ENCODE measurements at regions of chr5 and their contacts with region 1.

Region 1: DNA sequence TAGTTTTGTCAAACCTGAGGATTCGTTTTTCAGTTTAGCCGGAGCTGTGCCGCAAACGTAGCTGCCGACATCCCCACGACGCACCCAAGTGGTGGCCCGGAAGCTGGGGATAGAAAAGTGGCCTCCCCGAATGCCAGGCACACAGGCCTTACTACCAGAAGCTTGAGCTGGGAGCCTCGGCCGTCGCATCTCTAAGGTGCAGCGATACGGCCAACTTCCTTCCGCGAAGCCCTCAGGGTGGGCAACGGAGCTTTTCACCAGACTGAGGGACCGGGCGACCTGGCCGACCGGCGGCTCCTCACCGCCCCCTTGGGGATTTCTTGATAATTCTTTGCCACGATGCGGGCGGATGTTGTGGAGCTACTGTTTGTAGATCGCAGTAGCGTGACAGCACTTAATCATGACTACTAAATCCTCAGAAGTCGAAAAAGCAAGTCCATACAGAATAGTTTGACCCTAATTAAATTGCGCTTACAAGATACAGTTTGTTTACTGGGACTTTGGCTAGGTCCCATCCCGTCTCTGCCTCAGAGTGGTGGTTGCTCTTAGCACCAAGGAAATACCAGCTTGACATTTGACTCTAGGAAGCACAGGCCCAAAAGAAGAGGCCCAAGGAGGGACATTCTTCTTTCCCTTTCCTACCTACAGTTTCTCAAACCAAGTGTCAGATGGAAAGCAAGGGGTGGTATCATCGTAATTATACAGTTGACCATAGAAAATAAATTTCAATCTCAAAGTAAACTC is 613 bp upstream of the TMEM267 start:
- DNase-seq: peak; percentile 82
- H3K4me3 Mint-ChIP-seq: peak overlapping the region; percentile 97
- H3K27ac Mint-ChIP-seq: peak overlapping the region; percentile 100
- H3K4me1 Mint-ChIP-seq: peaks cover 34% of the 10 kb centered on the region
- H3K27me3 Mint-ChIP-seq: no peaks in the 10 kb centered on the region

Region 2: DNA sequence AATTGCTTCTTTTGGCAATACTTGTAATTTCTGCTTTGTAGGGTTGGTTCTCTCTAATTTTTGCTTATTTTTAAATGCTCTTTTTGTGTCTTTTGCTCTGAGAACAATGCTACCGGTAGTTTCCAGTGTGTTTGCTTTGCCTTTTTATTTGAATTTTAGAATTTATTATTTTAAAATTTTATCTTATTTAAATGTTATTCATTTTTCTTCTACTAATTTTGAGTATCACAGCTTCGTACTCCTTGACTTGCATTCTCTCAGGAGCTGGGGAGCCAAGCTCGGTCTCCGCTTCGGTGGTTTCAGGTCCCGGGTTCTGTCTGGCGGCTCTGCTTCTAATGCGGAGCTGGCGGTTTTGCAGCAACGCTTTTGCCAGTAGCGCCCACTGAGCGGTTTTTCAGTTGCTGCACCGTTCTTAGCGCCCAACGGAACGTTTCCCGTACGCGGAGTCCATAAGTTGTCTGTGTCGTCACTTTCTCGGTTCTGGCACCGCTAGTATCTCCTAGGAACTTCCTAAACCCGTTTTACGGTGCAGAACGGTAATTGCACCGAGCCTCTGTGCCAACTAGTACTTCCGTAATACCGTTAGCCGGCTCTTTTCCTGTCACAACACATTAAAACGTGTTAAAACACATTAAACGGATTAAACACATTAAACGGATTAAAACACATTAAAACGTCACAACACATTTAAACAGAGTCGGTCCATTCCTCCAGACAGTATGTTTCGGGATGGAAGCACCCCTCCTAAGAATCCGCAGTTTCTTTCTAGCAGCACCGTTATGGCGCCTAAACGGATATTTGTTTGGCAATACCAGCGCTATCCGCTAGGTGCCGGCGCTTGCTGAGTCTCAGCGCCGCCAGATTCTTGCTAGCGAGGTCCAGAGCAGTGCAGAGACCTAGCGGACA is 489.8 kb before region 1 on chr5:
- intact Hi-C with region 1: loop called (anchors 2 kb)
- DNase-seq: peak; percentile 84
- H3K4me3 Mint-ChIP-seq: peak overlapping the region; percentile 98
- H3K27ac Mint-ChIP-seq: peak overlapping the region; percentile 100
- H3K4me1 Mint-ChIP-seq: peaks cover 60% of the 10 kb centered on the region
- H3K27me3 Mint-ChIP-seq: peaks cover 3% of the 10 kb centered on the region

Region 3: GRCh38 chr5:43066799-43067741 is 417.2 kb before region 1 on chr5:
- intact Hi-C with region 1: loop called (anchors 2 kb)
- DNase-seq: peak; percentile 78
- H3K4me3 Mint-ChIP-seq: peak overlapping the region; percentile 99
- H3K27ac Mint-ChIP-seq: peak overlapping the region; percentile 100
- H3K4me1 Mint-ChIP-seq: peaks cover 47% of the 10 kb centered on the region
- H3K27me3 Mint-ChIP-seq: peaks cover 3% of the 10 kb centered on the region

Region 4: GRCh38 chr5:43120720-43121564 is 363.3 kb before region 1 on chr5 and contains the start of gene ZNF131:
- intact Hi-C with region 1: loop called (anchors 1 kb)
- DNase-seq: peak; percentile 96
- H3K4me3 Mint-ChIP-seq: peak within 1 kb of the TSS; percentile 95
- H3K27ac Mint-ChIP-seq: peak within 1 kb of the TSS; percentile 98
- H3K4me1 Mint-ChIP-seq: peaks cover 42% of the 10 kb centered on the region
- H3K27me3 Mint-ChIP-seq: peaks cover 2% of the 10 kb centered on the region
- total RNA-seq, gene ZNF131: 38.3 and 40.2 TPM in 2 replicates

Region 5: DNA sequence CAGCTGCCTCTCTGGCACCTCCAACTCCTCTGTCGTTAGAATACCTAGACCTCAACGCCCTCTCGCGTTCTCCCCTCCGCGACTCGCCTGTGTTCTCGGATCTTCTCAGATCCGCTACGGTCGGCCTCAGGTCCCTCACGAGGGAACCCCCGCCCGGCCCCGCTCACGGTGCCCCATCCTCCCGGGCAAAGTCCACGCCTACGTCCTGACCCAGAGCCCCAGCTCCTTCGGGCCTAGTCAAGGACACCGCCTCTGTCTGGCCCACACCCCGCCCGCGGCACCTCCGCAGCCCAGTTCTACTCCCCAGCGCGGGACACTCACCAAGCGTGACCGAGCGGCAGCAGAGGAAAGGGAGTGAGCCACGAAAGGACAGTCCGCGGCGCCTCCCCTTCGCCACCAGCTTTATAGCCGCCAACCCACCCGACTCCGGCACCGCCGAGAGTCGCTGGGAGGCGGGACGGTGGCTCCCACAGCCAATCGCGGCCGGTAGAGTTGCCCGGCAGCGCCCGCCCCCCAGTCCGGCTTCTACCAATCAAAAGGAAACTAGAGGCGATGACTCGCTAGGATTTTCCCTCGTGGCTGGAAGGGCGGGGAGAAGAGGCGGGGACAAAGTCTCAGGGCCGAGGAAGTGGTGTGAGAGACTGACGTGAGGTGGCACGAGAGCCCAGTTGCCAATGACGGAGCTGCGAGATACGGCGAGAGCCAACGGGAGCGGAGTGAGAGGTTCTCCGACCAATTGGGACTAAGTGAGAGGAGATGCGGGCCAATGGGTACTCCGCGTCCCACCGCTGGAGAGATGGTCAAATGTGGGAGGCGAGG is 171.0 kb before region 1 on chr5 and contains the start of gene HMGCS1:
- intact Hi-C with region 1: loop called (anchors 1 kb)
- DNase-seq: peak; percentile 99
- H3K4me3 Mint-ChIP-seq: peak within 1 kb of the TSS; percentile 93
- H3K27ac Mint-ChIP-seq: peak within 1 kb of the TSS; percentile 98
- H3K4me1 Mint-ChIP-seq: peaks cover 73% of the 10 kb centered on the region
- H3K27me3 Mint-ChIP-seq: no peaks in the 10 kb centered on the region
- total RNA-seq, gene HMGCS1: 216 and 218 TPM in 2 replicates

Region 6: DNA sequence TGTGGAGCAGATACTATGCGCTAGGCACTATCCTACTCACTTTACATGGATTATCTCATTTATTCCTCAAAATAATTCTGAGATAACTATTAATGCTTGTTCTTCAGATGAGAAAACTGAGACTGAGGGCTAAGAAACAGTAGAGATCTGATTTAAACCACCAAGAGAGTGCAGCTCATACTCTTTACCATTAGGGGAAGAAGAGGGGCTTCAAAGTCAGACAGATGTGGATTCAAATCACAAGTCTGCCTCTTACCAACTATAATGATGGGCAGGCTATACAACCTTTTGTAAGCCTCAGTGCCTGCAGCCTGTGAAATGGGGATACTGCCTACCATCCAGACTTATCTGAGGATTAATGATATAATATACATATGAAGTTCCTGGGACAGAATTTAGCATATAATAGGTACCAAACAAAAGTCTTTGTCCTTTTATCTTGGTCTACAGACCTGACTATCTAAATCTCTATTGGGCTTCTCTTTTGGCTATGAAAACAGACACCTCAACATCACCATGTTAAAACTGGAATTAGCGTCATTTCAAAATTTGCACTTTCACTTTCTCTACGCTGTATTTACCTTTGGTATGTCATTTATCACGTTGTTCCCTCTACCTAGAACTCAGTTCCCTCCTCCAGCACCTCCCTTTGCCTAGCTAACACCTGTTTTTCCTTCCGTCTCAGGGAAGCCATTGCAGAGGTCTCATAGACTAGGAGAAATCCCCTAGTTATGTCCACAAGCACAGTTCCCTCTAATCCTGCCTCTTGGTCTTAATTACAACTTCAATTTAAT is 13.2 kb after region 1 on chr5:
- intact Hi-C with region 1: loop called (anchors 2 kb)
- DNase-seq: no peak
- H3K4me3 Mint-ChIP-seq: no peak overlapping the region
- H3K27ac Mint-ChIP-seq: no peak overlapping the region
- H3K4me1 Mint-ChIP-seq: peaks cover 6% of the 10 kb centered on the region
- H3K27me3 Mint-ChIP-seq: no peaks in the 10 kb centered on the region

Region 7: DNA sequence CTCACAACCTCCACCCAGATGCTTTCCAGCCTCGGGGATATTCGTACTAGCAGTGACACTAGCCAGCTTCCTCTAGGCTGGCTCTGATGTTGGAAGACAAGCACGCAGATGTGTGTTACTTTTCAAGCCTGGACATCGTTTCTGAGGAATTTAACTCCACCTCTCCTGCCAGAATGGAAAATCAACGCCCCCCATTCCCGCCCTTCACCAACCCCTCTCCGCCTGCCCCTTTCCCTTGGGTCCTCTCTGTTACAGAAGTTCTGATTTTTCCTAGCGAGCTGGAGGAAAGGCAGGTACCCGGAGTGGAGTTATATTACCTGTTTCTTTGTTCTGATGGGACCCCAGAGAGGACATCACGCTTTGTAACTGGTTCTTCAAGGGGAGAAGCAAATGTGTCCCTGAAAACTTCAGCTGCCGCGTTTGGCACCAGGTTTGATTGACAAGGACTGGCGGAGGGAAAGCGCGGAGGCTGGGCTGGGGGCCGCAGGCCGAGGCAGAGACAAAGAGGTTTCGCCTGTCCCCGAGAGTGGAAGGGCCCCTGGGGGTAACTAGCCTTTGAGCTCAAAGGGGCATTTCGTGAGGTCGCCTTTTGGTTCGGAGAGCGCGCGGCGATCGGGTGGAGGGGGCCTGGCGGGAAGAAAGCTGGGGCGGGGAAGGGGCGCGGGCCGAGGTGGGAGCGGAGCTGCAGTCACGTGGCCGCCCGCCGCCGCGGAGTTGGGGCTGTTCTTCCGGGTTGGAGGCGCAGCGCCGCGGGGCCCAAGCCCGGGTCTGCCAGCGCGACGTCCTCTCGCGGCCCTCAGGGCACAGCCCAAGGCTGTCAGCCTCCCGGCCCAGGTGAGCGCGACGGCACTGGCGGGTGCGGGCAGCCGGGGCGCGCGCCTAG is 118.4 kb after region 1 on chr5 and contains the start of gene NNT:
- intact Hi-C with region 1: loop called (anchors 1 kb)
- DNase-seq: peak; percentile 76
- H3K4me3 Mint-ChIP-seq: peak within 1 kb of the TSS; percentile 91
- H3K27ac Mint-ChIP-seq: peak within 1 kb of the TSS; percentile 91
- H3K4me1 Mint-ChIP-seq: peaks cover 34% of the 10 kb centered on the region
- H3K27me3 Mint-ChIP-seq: no peaks in the 10 kb centered on the region
- total RNA-seq, gene NNT: 43.6 and 47.5 TPM in 2 replicates

Measured in activated T-helper 1 cell treated with anti-CD3 and anti-CD28 coated beads, Interleukin-12 subunit alpha, Interleukin-12 subunit beta, Interleukin-2, Interleukin-4 antibody, amounts not matched to agents 30 ng/mL and 10 ng/mL and 1 ng/mL, durations not matched to agents 14 hours and 24 hours and 36 hours (primary cell).